ENCODE measurements at regions of chr1 and their contacts with region 1.

Region 1: DNA sequence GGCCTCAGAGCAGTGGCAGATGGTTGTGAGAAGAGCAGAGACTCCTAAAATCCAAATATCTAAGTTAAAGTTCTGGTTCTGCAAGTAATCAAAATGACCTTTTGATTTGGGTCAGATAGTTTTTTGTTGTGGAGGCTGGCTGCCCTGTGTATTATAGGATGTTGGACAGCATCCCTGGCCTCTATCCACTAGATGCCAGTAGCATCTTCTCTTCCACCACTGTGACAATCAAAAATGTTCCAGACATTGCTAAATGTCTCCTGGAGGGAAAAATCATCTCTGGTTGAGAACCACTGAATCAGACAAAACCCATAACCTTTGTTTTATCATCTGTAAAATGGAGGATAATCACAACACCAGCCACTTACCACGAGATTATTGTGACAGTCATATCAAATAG is 5.9 kb upstream of the DPT start:
- DNase-seq: no peak
- H3K4me3 ChIP-seq: no peak overlapping the region
- H3K27ac ChIP-seq: peak overlapping the region in 6 of 59 donors; percentile 1 to 38 (median 16)
- H3K27me3 ChIP-seq: no peaks in the 10 kb centered on the region
- CTCF ChIP-seq: peak in 50 of 56 donors; percentile 14 to 66 (median 40)

Region 2: DNA sequence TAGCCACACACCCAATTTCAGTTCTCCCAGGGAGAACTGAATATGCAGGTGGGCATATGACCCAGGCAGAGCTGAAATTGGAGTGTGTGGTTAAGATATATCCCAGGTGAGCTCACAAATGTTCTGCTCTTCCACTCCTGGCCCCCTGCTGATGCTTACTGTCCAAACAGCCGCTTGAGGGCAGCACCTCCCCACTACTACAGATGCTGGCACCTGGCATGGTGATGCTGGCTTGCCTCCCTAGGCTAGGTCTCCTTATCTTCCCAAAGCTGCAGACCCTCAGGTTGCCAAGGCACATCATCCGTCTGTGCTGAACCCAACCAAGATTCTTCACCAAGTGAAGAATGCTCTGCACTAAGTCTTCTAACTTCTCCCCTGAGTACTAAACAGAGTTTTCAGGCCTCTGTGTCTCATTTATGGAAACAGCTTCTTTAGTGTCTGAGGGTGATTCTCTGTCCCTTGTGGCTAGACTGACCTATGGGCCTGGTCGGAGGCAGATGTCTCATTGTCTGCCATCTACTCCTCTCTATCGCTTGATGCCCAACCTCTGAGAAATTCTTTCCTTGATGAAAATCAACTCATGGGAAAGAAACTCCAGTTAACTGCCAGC is 131.3 kb before region 1 on chr1:
- intact Hi-C with region 1: loop called in 1 of 2 experiments (anchors 10 kb)
- DNase-seq: peak; percentile 66 to 89 (median 80)
- H3K4me3 ChIP-seq: no peak overlapping the region
- H3K27ac ChIP-seq: peak overlapping the region in 3 of 59 donors; percentile 2 to 13 (median 9)
- H3K27me3 ChIP-seq: no peaks in the 10 kb centered on the region
- CTCF ChIP-seq: peak; percentile 25 to 93 (median 85)

Region 3: GRCh38 chr1:168637350-168637991 is 97.5 kb before region 1 on chr1:
- intact Hi-C with region 1: loop called (anchors 10 kb)
- DNase-seq: no peak
- H3K4me3 ChIP-seq: no peak overlapping the region
- H3K27ac ChIP-seq: peak overlapping the region in 46 of 59 donors; percentile 0 to 84 (median 64)
- H3K27me3 ChIP-seq: no peaks in the 10 kb centered on the region
- CTCF ChIP-seq: peak; percentile 43 to 83 (median 64)

Region 4: GRCh38 chr1:168643152-168643551 is 91.8 kb before region 1 on chr1:
- intact Hi-C with region 1: loop called (anchors 10 kb)
- DNase-seq: no peak
- H3K4me3 ChIP-seq: no peak overlapping the region
- H3K27ac ChIP-seq: no peak overlapping the region
- H3K27me3 ChIP-seq: no peaks in the 10 kb centered on the region
- CTCF ChIP-seq: no peak

Region 5: DNA sequence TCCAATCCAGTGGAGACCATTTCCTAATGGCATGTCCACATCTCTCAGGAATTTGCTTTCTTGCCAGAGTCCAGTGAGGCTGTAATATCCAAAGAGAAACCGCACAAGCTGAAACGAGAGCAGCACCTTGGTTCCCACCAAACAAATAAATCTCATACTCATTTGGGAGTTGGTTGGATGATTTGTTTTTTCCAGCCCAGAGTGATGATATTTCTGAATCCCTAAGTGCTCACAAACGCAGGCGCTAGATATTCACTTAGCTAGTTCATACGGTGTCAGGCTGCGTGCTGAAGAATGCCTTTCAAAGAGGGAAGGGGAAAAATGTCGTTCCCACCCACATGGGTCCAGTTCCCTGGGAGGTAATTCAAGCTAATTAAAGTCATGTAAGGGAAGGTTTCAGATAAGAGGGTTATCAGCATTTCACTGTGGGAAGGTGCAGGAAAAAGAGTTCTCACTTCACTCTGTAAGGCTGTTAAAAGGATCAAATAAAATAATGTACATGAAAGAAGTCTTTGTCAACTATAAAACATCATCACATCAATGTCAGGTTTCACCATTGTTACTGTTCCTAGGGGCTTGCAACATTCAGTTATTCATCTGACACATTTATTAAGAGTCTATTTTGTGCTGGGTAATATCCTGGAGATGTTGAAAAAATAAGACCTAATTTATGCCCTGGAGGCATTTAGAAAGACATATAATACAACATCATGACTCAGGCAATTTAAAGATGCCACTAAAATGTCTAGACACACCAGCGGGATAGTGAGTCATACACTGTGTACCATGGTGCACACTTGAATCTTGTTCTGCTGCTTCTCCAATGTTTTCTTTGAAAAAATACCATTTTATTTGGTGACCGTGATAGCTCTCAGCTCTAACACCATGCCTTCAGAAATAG is 25.3 kb before region 1 on chr1:
- intact Hi-C with region 1: no loop called
- DNase-seq: no peak
- H3K4me3 ChIP-seq: peak overlapping the region in 1 of 59 donors; percentile 4
- H3K27ac ChIP-seq: peak overlapping the region in 1 of 59 donors; percentile 8
- H3K27me3 ChIP-seq: no peaks in the 10 kb centered on the region
- CTCF ChIP-seq: no peak

Region 6: GRCh38 chr1:169133801-169134502 is 399.0 kb after region 1 on chr1:
- intact Hi-C with region 1: loop called in 1 of 2 experiments (anchors 5 kb)
- DNase-seq: no peak
- H3K4me3 ChIP-seq: no peak overlapping the region
- H3K27ac ChIP-seq: peak overlapping the region in 49 of 59 donors; percentile 1 to 84 (median 60)
- H3K27me3 ChIP-seq: no peaks in the 10 kb centered on the region
- CTCF ChIP-seq: peak in 55 of 56 donors; percentile 15 to 81 (median 57)

Region 7: GRCh38 chr1:169348383-169349036 is 613.6 kb after region 1 on chr1:
- intact Hi-C with region 1: loop called in 1 of 2 experiments (anchors 10 kb)
- DNase-seq: no peak
- H3K4me3 ChIP-seq: no peak overlapping the region
- H3K27ac ChIP-seq: no peak overlapping the region
- H3K27me3 ChIP-seq: no peaks in the 10 kb centered on the region
- CTCF ChIP-seq: peak; percentile 72 to 97 (median 87)